HEK293 (cell line): ENCODE measurements at regions of chr17 and their contacts with region 1.

Region 1: GRCh38 chr17:44919885-44920564 is 4.7 kb upstream of the GFAP start:
- H3K4me3 ChIP-seq: no peak overlapping the region
- H3K27ac ChIP-seq: no peak overlapping the region
- H3K4me1 ChIP-seq: no peaks in the 10 kb centered on the region; the same call in 1 of the 2 replicates
- CTCF ChIP-seq: peak; percentile 87

Region 2: DNA sequence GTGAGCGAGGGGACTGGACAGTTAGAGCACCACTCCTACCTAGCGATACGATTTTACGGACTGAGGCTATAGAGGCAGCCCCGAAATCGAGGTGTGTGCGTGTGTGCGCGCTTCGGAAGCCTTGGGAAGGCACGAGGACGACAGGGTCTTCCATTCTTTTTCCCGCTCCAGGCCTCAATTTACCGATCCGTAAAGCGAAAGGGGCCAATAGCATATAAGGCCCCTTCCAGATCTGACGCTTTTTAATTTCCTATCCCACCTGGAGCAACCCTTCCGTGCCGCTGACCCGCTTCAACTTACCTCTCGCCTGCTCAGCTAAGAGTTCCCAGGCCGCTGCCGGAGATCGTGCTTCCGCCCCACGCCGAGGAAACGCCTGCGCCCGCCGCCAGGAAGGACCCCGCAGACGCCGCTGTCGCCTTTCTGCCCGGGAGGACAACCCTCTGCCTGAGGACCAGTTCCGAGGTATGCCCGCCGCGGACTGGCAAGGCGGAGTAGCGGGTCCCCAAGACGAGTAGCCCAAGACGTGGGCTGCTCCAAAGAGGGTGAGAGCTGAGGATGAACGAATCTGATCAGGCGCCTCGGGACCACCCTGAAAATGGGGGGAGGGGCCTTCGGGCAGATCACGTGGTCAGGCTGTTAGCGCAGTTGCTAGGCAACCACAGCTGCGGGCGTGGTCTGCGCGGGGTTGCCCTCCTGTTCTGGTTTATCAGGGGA is 20.8 kb before region 1 on chr17 and contains the start of gene EFTUD2:
- CTCF ChIA-PET with region 1: interaction called, 74 read pairs
- POLR2A ChIA-PET with region 1: interaction called, 3 read pairs
- H3K4me3 ChIP-seq: peak within 1 kb of the TSS; percentile 74
- H3K27ac ChIP-seq: peak within 1 kb of the TSS; percentile 93
- H3K4me1 ChIP-seq: peaks cover 24% of the 10 kb centered on the region
- CTCF ChIP-seq: no peak; the same call in 1 of the 2 replicates

Region 3: DNA sequence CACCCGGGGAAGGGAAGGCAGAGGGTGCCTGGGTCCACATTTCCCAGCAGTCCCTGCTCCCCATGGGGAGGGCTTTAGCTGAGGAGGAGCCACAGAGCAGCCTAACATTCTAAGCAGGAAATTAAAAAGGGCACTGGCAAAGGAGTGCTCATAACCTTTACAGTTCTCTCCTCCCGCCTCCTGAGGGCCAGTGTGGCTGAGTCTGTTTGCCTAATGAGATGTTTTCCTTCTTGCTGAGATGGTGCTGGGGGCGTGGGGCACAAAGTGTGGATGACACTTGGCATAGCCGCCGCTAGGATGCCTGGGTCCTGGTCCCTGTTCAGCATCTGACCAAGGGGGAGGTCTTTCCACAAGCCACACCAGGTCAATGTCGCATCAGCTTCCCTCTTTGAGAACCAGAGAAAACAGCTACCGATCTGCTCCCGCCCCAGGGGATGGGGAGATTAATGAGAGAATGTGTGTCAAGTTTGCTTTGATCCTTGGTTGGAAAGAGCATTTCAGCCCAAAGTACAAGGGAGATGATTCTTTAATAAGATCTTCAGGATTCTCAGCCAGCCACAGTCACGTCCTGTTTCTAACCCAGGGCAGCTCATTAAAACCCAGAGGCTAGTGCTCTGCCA is 21.8 kb after region 1 on chr17:
- CTCF ChIA-PET with region 1: interaction called, 39 read pairs
- POLR2A ChIA-PET with region 1: interaction called, 4 read pairs
- H3K4me3 ChIP-seq: no peak overlapping the region
- H3K27ac ChIP-seq: peak overlapping the region; percentile 43
- H3K4me1 ChIP-seq: peaks cover 4% of the 10 kb centered on the region; the same call in 1 of the 2 replicates
- CTCF ChIP-seq: no peak

Region 4: GRCh38 chr17:44968226-44969143 is 48.5 kb after region 1 on chr17 and contains the start of gene C1QL1:
- CTCF ChIA-PET with region 1: interaction called, 10 read pairs
- POLR2A ChIA-PET with region 1: interaction called, 4 read pairs
- H3K4me3 ChIP-seq: peak within 1 kb of the TSS; percentile 37
- H3K27ac ChIP-seq: peak within 1 kb of the TSS; percentile 16; the same call in 1 of the 2 replicates
- H3K4me1 ChIP-seq: peaks cover 3% of the 10 kb centered on the region
- CTCF ChIP-seq: peak; percentile 94

Region 5: DNA sequence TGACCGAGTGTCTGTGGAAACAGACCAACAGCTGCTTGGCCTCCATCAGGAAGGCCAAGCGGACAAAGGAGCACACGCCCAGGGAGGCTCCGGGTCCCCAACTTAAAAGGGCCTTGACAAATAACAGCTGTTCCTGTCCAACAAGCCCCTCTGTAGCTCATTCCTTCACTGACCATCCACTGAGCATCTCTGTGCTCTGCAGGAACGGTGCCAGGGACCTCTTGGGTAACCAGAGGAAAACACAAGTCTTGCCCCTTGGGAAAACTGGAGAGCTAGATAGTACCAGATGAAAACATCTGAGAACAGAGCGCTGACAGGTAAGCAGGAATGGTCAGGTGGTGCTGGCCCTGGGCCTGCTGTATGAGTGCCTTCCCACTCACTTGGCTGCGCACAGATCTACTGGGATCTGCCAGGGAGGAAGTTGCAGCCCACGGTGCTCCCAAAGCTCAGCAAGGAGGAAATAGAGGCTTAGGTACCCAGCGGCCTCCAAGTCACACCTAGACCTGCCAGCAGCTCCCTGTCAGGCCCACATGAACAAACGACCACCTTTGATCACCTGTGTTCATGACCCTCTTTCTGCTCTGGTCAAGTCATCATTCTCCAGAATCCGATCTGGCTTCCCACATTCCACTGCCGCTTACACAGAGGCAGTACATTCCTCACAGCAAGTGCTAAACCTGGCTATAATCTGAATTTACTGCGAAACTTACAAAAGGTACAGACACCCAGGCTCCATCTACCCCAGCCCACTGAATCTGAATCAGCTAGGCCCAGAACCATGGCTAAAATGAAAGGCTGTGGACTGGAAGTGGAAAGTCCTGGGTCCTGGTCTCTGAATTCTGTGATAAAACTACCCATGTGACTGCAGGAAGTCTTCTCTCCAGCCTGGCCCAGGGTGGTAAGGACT is 119.0 kb after region 1 on chr17:
- CTCF ChIA-PET with region 1: interaction called, 10 read pairs
- POLR2A ChIA-PET with region 1: no interaction called
- H3K4me3 ChIP-seq: no peak overlapping the region
- H3K27ac ChIP-seq: peak overlapping the region; percentile 34; the same call in 1 of the 2 replicates
- H3K4me1 ChIP-seq: peaks cover 8% of the 10 kb centered on the region; the same call in 1 of the 2 replicates
- CTCF ChIP-seq: no peak